ENCODE measurements at regions of chr1 and their contacts with region 1.

Region 1: GRCh38 chr1:205321164-205321958 is at the start of gene NUAK2:
- DNase-seq: peak; percentile 85
- ATAC-seq: peak; percentile 80
- H3K4me3 ChIP-seq: peak within 1 kb of the TSS; percentile 73 to 90 (median 81)
- H3K27ac ChIP-seq: no peak within 1 kb of the TSS
- H3K4me1 ChIP-seq: peaks cover 63% of the 10 kb centered on the region
- H3K27me3 ChIP-seq: peaks cover 0 to 14% of the 10 kb centered on the region in 2 experiments; a peak in 3 of 5 replicates
- CTCF ChIP-seq: peak; percentile 57
- EP300 ChIP-seq: no peak
- POLR2A ChIP-seq: peak; percentile 65 to 69
- RAD21 ChIP-seq: no peak; the same call in 1 of the 2 replicates
- total RNA-seq, gene NUAK2: 1.1 and 1.2 TPM in 2 replicates

Region 2: DNA sequence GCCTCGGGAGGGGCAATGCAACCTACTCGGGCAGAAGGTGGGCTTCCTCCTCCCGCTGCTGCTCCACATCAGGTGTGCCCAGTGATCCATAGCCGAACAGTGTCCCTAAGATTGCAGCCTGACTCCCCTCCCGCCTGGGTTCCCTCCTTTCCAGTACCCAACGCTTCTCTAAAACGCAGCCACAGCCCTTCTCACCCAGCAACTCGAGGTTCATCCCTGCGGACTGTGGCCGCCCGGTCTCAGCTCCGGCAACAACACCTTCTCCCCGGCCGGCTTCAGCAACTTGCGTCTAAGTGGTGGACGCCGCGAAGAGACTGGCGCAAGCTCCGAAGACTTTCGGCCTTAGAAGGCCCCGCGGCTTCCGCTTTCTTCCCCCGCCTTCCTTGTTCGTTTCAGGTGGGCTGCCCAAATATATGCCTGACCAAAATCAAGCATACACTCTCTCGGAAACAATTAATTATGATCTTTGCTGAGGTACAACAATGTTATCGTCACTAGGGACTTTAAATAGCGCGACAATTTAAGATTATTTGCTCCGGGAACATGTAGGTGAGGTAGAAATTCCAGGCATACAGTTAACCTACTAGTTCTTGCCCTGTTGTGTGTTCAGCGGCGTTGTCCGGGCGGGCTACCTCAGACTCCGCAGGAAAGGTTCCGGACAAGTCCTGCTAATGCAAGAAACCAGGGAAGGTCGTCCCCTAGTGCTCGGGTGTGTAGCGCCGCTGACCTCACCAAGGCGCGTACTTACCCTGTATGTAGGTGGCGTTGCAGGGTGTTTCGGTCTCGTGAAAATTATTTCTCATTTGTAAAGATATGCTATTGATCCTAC is 199.5 kb before region 1 on chr1 and contains the start of gene RBBP5:
- CTCF ChIA-PET with region 1: no interaction called
- POLR2A ChIA-PET with region 1: interaction called, 12 read pairs
- in situ Hi-C with region 1: no loop called
- intact Hi-C with region 1: loop called (anchors 5 kb)
- DNase-seq: peak; percentile 94
- ATAC-seq: peak; percentile 99
- H3K4me3 ChIP-seq: peak within 1 kb of the TSS; percentile 85 to 95 (median 85)
- H3K27ac ChIP-seq: peak within 1 kb of the TSS; percentile 94
- H3K4me1 ChIP-seq: peaks cover 31% of the 10 kb centered on the region
- H3K27me3 ChIP-seq: no peaks in the 10 kb centered on the region; a peak in 1 of 5 replicates
- CTCF ChIP-seq: peak; percentile 92
- EP300 ChIP-seq: peak; percentile 50 to 53; a peak in 2 of 4 replicates
- POLR2A ChIP-seq: peak; percentile 86 to 89
- RAD21 ChIP-seq: peak; percentile 64
- total RNA-seq, gene RBBP5: 17.1 and 26.2 TPM in 2 replicates

Region 3: DNA sequence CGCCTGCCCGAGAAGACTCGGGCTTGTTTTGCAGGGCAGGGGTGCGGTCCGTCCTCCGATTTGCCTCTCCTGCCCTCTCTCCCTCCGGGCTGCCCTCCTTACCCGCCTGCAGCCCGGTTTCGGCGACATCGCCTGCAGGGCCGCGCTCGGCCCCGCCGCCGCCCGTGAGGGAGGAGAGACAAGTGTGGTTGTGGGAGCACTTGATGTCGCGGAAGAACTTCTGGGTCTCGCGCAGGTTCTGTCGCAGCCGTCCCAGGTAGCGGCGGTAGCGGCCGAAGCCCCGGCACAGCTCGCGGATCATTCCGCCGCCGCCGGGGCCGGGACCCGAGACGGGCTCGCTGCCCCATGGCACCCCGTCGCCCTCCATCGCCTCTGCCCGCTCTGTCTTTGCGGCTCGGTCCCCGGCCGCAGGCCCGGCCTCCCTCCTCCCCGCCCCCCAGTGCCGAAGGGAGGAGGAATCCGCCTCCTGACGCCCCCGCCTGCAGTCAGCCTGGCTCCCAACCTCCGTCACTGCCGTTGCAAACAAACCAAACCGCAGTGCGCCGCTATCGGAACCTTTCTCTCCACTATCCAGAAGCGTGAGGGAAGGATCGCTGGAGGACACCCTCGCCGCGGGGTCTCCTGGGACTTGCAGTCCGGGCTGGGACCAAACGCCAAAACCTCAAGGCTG is 110.1 kb before region 1 on chr1 and contains the start of gene DSTYK:
- CTCF ChIA-PET with region 1: no interaction called
- POLR2A ChIA-PET with region 1: no interaction called
- in situ Hi-C with region 1: no loop called
- intact Hi-C with region 1: no loop called
- DNase-seq: peak; percentile 85
- ATAC-seq: peak; percentile 94
- H3K4me3 ChIP-seq: peak within 1 kb of the TSS; percentile 89 to 100 (median 95)
- H3K27ac ChIP-seq: peak within 1 kb of the TSS; percentile 90
- H3K4me1 ChIP-seq: peaks cover 17% of the 10 kb centered on the region
- H3K27me3 ChIP-seq: peaks cover 0 to 4% of the 10 kb centered on the region in 2 experiments; a peak in 1 of 5 replicates
- CTCF ChIP-seq: peak; percentile 45
- EP300 ChIP-seq: no peak
- POLR2A ChIP-seq: peak; percentile 82 to 84
- RAD21 ChIP-seq: peak; percentile 63
- total RNA-seq, gene DSTYK: 4.8 and 6.1 TPM in 2 replicates

Region 4: DNA sequence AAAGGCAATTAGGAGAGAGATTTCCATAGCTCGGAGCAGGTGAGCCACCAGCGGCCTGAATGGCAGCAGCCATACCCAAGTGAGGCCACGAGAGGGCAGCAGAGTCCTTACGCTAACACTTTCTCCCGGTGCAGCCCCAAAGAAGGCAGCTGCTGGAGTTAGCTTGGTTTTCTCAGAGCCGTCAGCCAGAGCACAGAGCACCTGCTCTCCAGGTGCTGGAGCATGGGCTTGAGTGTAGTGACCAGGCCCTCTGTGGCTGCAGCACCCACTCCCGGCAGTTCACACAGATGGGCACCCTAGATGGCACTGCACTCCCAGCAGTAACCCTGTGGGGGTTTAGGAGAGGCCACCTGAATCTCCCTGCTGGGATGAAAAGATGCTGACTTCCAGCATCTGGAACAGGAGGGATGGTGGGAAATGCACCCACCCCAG is 47.8 kb before region 1 on chr1:
- CTCF ChIA-PET with region 1: interaction called, 150 read pairs
- POLR2A ChIA-PET with region 1: interaction called, 32 read pairs
- in situ Hi-C with region 1: loop called (anchors 5 kb)
- intact Hi-C with region 1: loop called (anchors 1 kb)
- DNase-seq: peak; percentile 65
- ATAC-seq: peak; percentile 86
- H3K4me3 ChIP-seq: no peak overlapping the region
- H3K27ac ChIP-seq: no peak overlapping the region
- H3K4me1 ChIP-seq: peaks cover 32% of the 10 kb centered on the region
- H3K27me3 ChIP-seq: peaks cover 2 to 28% of the 10 kb centered on the region in 2 experiments; a peak in 4 of 5 replicates
- CTCF ChIP-seq: peak; percentile 98
- EP300 ChIP-seq: no peak; a peak in 1 of 4 replicates
- POLR2A ChIP-seq: no peak
- RAD21 ChIP-seq: peak; percentile 99

Region 5: GRCh38 chr1:205284343-205285144 is 36.8 kb before region 1 on chr1:
- CTCF ChIA-PET with region 1: no interaction called
- POLR2A ChIA-PET with region 1: interaction called, 38 read pairs
- in situ Hi-C with region 1: no loop called
- intact Hi-C with region 1: loop called (anchors 1 kb)
- DNase-seq: peak; percentile 97
- ATAC-seq: peak; percentile 96
- H3K4me3 ChIP-seq: peak overlapping the region in 1 of 3 experiments; percentile 25; a peak in 2 of 6 replicates
- H3K27ac ChIP-seq: peak overlapping the region; percentile 15
- H3K4me1 ChIP-seq: peaks cover 53% of the 10 kb centered on the region
- H3K27me3 ChIP-seq: no peaks in the 10 kb centered on the region
- CTCF ChIP-seq: peak; percentile 61
- EP300 ChIP-seq: peak in 1 of 2 experiments; percentile 78; a peak in 1 of 4 replicates
- POLR2A ChIP-seq: no peak
- RAD21 ChIP-seq: no peak; the same call in 1 of the 2 replicates

Region 6: DNA sequence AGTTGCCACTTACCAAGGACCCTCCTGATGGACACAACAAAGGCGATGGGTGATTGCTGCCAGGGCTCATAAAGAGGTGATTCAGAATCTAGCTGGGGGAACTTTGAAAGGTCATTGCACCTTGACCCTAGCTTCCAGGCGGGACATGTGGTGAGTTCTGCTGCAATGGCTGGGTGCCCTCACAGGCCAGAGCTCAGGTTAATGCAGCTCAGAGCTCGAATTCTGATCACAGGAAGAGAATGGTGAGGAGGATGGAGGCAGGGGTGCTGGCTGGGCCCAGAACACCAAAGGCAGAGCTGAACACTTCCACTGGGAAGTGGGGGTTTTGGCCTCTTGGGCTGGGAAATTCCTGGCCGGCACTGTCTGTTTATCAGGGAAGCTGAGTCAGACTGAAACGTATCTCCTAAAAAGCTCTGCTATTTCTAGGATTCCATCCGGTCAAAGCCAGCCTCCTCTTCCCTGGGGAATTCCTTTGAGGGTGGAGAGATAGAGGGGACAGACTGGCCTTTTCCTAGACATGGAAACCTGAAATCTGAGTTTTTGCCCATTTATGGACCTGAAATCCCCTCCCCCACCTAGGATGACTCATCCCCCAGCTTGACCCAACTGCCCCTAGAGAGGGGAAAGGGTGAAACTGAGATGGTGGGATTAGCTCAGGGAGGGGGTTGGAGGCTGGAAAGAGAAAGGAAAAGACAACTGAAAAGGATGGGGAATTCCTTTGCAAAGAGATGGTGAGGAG is 27.0 kb before region 1 on chr1:
- CTCF ChIA-PET with region 1: no interaction called
- POLR2A ChIA-PET with region 1: interaction called, 71 read pairs
- in situ Hi-C with region 1: no loop called
- intact Hi-C with region 1: no loop called
- DNase-seq: peak; percentile 89
- ATAC-seq: peak; percentile 83
- H3K4me3 ChIP-seq: peak overlapping the region in 2 of 3 experiments; percentile 28 to 66; a peak in 5 of 6 replicates
- H3K27ac ChIP-seq: peak overlapping the region; percentile 86
- H3K4me1 ChIP-seq: peaks cover 82% of the 10 kb centered on the region
- H3K27me3 ChIP-seq: no peaks in the 10 kb centered on the region
- CTCF ChIP-seq: peak; percentile 18; the same call in 1 of the 2 replicates
- EP300 ChIP-seq: peak in 1 of 2 experiments; percentile 42; a peak in 1 of 4 replicates
- POLR2A ChIP-seq: peak in 1 of 2 experiments; percentile 63; a peak in 2 of 4 replicates
- RAD21 ChIP-seq: no peak; the same call in 1 of the 2 replicates

Region 7: GRCh38 chr1:205300886-205301821 is 20.2 kb before region 1 on chr1:
- CTCF ChIA-PET with region 1: no interaction called
- POLR2A ChIA-PET with region 1: interaction called, 46 read pairs
- in situ Hi-C with region 1: no loop called
- intact Hi-C with region 1: loop called (anchors 1 kb)
- DNase-seq: peak; percentile 94
- ATAC-seq: peak; percentile 97
- H3K4me3 ChIP-seq: peak overlapping the region; percentile 11 to 59 (median 14)
- H3K27ac ChIP-seq: peak overlapping the region; percentile 74
- H3K4me1 ChIP-seq: peaks cover 54% of the 10 kb centered on the region
- H3K27me3 ChIP-seq: no peaks in the 10 kb centered on the region
- CTCF ChIP-seq: 0 out of 2 replicates have a peak, but pooled peaks have one; percentile 19
- EP300 ChIP-seq: peak; percentile 77 to 82
- POLR2A ChIP-seq: peak in 1 of 2 experiments; percentile 42; a peak in 1 of 4 replicates
- RAD21 ChIP-seq: peak; percentile 77

Measured in HepG2 (cell line).